ENCODE measurements at regions of chr22 and their contacts with region 1.

Region 1: DNA sequence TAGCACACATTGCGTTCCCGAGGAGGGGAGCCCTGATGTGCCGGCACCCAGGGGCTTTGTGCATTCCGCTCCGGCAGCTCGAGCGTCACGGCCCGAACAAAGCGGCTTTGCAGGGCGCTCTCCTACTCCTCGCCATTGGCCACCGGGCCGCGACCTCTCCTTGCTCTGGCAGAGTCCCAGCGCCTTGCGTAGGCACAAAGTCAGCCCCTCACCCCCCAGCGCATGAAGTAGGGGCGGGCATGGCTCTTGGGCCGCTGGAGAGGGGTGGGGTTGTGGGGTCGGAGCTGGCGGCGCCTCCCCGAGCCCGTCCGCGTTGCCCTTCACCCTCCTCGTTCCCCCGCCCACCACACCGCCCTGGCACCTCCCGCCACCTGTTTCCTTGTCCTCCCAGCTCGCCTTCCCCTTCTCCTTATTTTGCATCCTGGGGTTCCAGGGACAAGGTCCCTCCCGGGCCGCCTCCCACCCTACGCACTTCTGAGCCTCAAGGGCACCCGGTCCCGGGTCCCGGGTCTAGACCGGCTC is 753 bp upstream of the PPARA start:
- DNase-seq: peak in 40 of 42 donors; percentile 25 to 82 (median 54)

Region 2: DNA sequence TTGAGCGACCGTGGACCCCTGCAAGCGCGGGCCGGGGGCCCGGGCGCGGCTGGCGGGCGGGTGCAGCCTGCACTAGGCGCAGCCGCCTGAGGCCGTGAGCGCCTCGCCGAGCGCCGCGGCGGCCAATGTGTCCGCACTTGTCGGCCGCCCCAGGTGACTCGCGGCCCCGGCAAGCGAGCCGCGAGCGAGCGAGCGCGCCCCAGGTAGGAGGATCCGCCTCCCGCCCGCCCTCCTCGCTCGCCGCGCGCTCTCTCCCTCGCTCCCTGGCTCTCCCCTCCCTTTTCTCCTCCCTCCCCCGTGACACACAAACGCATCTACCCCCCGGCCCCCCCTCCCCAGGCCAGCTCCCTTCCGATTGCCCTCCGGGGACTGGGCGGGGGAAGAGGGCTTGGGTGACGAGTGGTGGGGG is 172.6 kb before region 1 on chr22 and contains the start of gene WNT7B:
- intact Hi-C with region 1: no loop called
- DNase-seq: no peak

Region 3: DNA sequence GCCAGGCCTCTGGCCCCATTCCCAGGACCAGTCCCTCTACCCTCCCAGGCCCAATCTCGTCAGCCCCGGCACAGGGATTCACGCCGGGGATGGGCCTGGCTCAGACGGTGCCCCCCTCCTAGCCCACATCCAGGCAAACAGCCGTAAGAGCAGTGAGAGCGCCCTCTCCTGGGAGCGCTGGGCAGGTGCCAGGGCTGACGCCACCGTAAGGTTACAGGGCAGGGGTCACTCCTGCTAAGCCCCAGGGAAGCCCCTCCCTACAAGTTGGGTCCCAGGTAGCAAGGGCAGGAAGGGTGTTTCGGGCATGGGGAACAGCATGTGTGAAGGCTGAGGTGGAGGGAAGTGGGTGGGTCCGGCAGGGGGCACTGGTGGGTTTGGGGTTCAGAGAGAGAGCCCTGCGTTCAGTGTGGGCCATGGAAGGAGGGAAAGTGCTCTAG is 18.4 kb before region 1 on chr22:
- intact Hi-C with region 1: no loop called
- DNase-seq: no peak

Region 4: DNA sequence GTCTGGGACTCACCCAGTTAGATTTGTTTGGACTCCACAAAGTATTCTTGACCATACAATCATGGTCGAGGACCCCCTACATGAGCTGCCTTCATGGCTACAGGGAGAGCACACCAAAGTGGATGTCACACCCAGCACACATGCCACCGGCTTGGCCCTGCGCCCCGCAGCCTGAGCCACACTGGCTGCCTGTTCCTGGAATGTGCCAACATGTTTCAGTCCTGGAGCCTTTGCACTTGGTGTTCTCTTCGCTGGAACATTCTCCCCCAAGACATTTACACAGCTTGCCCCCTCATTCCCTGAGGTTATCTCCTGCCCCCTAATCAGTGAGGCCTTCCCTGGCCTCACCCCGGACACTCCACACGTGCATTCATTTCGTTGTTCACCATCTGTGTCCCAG is 46.7 kb after region 1 on chr22:
- intact Hi-C with region 1: no loop called
- DNase-seq: peak in 12 of 42 donors; percentile 6 to 49 (median 15)

Region 5: GRCh38 chr22:46245511-46245910 is 95.9 kb after region 1 on chr22:
- intact Hi-C with region 1: loop called (anchors 10 kb)
- DNase-seq: peak in 38 of 42 donors; percentile 33 to 83 (median 55)